ENCODE measurements at regions of chr16 and their contacts with region 1.

Region 1: DNA sequence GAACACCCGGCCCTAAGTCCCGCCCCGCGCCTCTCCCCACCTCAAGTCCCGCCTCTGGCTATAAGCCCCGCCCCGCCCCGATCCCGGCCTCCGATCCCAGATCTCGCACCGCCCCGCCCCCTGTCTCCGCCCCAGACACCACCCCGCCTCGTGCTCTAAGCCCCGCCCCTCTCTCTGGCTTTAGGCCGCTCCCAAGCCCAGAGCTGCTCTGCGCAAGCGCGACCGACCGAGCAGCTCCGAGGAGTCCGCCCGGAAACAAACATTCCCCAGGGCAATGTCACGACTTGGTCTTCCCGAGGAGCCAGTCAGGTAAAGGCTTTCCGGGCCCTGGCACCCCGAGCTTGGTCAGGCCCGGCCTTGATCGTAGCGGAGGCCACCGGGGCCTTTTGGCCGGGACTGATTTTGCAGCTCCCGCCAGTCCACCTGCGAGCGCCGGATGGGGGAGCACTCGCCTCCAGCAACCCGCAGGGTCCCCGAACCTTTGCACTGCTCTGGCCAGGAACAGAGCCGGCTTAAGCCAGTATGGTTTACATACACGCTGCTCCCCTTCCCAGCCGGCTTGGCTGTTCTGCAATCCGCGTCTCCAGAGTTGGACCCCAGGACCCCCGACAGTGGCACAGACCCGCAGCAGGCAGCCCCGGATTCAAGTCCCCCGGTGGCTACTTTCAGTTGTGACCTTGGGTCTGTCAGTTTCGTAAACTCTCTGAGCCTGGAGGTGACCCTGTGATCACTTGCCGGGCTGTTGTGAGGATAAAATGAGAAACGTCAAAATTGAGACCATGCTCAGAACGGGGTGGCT is at the start of gene NUDT7:
- DNase-seq: peak; percentile 93
- ATAC-seq: peak; percentile 98
- H3K4me3 Mint-ChIP-seq: peak within 1 kb of the TSS; percentile 90
- H3K27ac Mint-ChIP-seq: peak within 1 kb of the TSS; percentile 88
- H3K4me1 Mint-ChIP-seq: peaks cover 10% of the 10 kb centered on the region
- H3K27me3 Mint-ChIP-seq: no peaks in the 10 kb centered on the region
- CTCF ChIP-seq: no peak
- total RNA-seq, gene NUDT7: 4.0 and 4.7 TPM in 2 replicates

Region 2: DNA sequence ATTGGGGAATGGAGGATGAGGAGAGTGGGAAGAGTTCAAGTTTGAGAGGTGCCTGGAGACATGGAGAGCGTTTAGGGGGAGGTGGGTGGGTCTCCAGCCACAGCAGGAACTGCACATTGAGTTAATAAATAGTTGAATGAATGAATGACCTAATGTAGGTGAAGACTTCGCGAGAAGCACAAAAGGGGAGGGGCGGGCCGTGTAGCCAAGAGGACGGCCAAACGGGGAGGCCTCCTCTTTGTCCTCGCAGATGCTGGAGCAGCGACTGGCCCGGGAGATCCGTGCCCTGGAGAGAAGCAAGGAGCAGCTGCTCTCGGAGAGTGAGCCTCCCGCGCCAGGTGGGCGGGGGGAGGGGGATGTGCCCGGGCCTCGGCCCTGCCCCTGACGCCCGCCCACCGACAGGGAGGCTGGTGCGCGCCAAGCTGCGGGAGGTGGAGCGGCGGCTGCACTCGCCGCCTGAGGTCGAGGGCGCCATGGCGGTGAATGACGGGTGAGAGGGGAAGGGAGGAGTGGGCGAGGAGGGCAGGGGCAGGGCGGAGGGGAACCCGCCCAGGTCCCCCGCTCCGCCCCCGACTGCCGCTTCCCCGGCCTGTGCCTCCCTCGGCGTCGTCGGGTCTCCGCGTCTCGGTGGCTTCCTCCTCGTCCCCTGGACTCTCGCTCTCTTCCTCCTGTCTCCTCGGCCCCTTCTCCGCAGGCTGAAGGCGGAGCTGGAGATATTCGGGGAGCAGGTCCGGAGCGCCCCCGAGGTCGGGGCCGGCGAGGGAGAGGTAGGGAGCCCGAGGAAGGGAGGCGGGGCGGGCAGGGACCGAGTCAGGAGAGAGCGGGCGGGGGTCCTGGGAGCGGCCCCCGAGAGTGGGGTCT is 510.4 kb before region 1 on chr16:
- CTCF ChIA-PET with region 1: no interaction called
- POLR2A ChIA-PET with region 1: no interaction called
- intact Hi-C with region 1: loop called (anchors 5 kb)
- DNase-seq: peak; percentile 63
- ATAC-seq: peak; percentile 71
- H3K4me3 Mint-ChIP-seq: peak overlapping the region; percentile 89
- H3K27ac Mint-ChIP-seq: peak overlapping the region; percentile 37
- H3K4me1 Mint-ChIP-seq: peaks cover 9% of the 10 kb centered on the region
- H3K27me3 Mint-ChIP-seq: no peaks in the 10 kb centered on the region
- CTCF ChIP-seq: no peak

Region 3: GRCh38 chr16:77700846-77701245 is 21.7 kb before region 1 on chr16:
- CTCF ChIA-PET with region 1: no interaction called
- POLR2A ChIA-PET with region 1: interaction called, 10 read pairs
- intact Hi-C with region 1: no loop called
- DNase-seq: no peak
- ATAC-seq: no peak
- H3K4me3 Mint-ChIP-seq: no peak overlapping the region
- H3K27ac Mint-ChIP-seq: no peak overlapping the region
- H3K4me1 Mint-ChIP-seq: no peaks in the 10 kb centered on the region
- H3K27me3 Mint-ChIP-seq: peaks cover 2% of the 10 kb centered on the region
- CTCF ChIP-seq: no peak

Region 4: GRCh38 chr16:77780378-77780837 is 57.9 kb after region 1 on chr16:
- CTCF ChIA-PET with region 1: no interaction called
- POLR2A ChIA-PET with region 1: no interaction called
- intact Hi-C with region 1: no loop called
- DNase-seq: no peak
- ATAC-seq: no peak
- H3K4me3 Mint-ChIP-seq: no peak overlapping the region
- H3K27ac Mint-ChIP-seq: no peak overlapping the region
- H3K4me1 Mint-ChIP-seq: no peaks in the 10 kb centered on the region
- H3K27me3 Mint-ChIP-seq: no peaks in the 10 kb centered on the region
- CTCF ChIP-seq: no peak

Measured in activated B cell treated with CpG ODN at 0.5 μM for 24 hours (primary cell).